Sigmoid colon (tissue), 7 donors: ENCODE measurements at regions of chr6 and their contacts with region 1.

Region 1: DNA sequence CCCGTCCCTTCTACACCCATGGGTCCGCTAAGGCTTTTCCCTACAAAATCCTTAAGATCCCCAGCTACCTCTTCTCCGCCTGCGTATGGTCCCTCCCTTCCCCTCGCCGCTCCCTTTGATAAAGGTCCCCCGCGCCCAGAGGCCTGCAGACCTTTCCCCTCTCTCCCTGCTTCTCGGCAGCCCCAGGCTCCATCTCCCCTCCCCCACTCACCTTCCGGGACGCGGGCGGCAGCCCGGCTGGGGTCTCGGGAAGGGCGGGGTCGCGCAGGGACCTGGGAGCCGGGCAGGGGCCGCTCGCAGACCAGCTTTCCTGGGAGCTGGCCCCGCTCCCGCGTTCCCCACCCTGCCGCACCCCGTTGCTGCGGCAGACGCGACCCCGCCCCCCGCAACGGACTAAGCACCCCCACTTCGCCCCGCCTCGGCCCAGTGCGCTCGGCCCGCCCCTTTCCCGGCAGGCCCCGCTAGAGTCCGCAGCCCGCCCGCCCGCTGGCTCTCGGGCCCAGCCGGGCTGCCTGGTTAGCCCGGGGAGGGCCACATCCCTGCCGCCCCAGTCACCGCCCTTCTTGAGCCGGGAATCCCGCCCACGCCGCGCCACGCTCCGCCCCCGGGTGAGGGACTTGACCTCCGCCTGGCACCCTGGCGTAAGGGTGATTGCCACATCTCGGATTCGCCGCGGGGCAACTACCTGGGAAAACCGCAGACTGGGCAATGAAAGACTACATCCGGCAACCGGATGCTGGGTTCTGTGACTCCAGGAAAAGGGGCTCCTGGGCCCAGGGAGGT is at the start of gene FLOT1:
- DNase-seq: peak; percentile 99
- H3K4me3 ChIP-seq: peak within 1 kb of the TSS; percentile 71 to 90 (median 82)
- H3K27ac ChIP-seq: peak within 1 kb of the TSS; percentile 90 to 98 (median 96)
- H3K4me1 ChIP-seq: peaks cover 3 to 52% (median 42%) of the 10 kb centered on the region in 4 donors
- H3K27me3 ChIP-seq: no peaks in the 10 kb centered on the region
- CTCF ChIP-seq: no peak
- EP300 ChIP-seq: no peak
- POLR2A ChIP-seq: peak; percentile 80 to 87
- total RNA-seq, gene FLOT1: 141 to 206 (median 160) TPM

Region 2: GRCh38 chr6:30781743-30782424 is 39.4 kb after region 1 on chr6:
- intact Hi-C with region 1: loop called (anchors 2 kb)
- DNase-seq: peak; percentile 99
- H3K4me3 ChIP-seq: no peak overlapping the region
- H3K27ac ChIP-seq: peak overlapping the region; percentile 85 to 90 (median 88)
- H3K4me1 ChIP-seq: peaks cover 2 to 54% (median 47%) of the 10 kb centered on the region in 4 donors
- H3K27me3 ChIP-seq: no peaks in the 10 kb centered on the region
- CTCF ChIP-seq: no peak
- EP300 ChIP-seq: peak; percentile 76 to 96 (median 86)
- POLR2A ChIP-seq: peak in 1 of 2 donors; percentile 19

Region 3: DNA sequence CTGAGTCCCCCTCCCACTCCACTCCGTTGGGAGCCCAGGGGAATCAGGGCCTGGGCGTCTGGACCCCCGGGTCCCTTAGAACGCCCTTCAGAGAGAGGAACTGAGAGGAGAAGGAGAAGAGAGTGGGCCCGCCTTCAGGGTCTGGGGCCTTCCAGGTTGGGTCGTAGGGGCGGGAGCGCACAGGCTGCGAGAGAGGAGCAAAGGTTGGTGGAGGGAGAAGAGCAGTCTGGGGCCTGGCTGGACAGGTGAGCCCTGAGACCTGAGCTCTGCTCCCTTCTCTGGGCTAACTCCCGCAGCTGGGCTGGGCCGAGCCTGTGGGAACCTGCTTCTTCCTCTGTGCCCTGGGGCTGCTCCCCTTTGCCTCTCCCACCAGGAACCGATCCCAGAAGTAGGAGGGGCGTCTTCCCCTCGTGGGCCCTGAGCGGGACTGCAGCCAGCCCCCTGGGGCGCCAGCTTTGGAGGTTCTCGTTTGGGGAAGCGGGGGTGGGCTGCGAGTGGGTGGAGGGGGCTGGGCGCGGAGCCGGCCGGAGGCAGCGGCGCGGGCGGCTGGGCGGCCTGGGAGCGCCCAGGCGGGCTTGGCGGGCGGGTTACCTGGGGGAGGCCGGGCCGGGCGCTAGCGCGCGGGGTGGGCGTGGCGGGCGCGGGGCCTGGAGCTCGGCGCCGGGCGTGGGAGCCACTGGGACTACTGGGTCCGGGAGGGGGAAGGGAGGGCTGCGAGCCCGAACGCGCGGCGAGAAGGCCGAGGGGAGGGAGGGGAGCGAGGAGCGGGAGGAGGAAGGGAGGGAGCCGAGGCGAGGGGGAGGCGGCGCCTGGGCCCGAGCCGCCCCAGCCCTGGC is 141.4 kb after region 1 on chr6 and contains the start of gene DDR1:
- intact Hi-C with region 1: loop called (anchors 2 kb)
- DNase-seq: peak; percentile 91
- H3K4me3 ChIP-seq: peak within 1 kb of the TSS; percentile 80 to 93 (median 87)
- H3K27ac ChIP-seq: peak within 1 kb of the TSS; percentile 89 to 95 (median 94)
- H3K4me1 ChIP-seq: peaks cover 0 to 46% (median 32%) of the 10 kb centered on the region in 4 donors
- H3K27me3 ChIP-seq: no peaks in the 10 kb centered on the region
- CTCF ChIP-seq: no peak
- EP300 ChIP-seq: no peak
- POLR2A ChIP-seq: no peak
- total RNA-seq, gene DDR1: 7.9 to 25.2 (median 13.6) TPM

Region 4: GRCh38 chr6:31087494-31088089 is 345.1 kb after region 1 on chr6:
- intact Hi-C with region 1: loop called (anchors 10 kb)
- DNase-seq: peak; percentile 89
- H3K4me3 ChIP-seq: no peak overlapping the region
- H3K27ac ChIP-seq: no peak overlapping the region
- H3K4me1 ChIP-seq: peaks cover 0 to 10% (median 3%) of the 10 kb centered on the region in 4 donors
- H3K27me3 ChIP-seq: peaks cover 0 to 11% (median 0%) of the 10 kb centered on the region in 3 donors
- CTCF ChIP-seq: peak in 3 of 4 experiments; percentile 69 to 74 (median 74)
- EP300 ChIP-seq: no peak
- POLR2A ChIP-seq: no peak